ENCODE measurements at regions of chr6 and their contacts with region 1.

Region 1: DNA sequence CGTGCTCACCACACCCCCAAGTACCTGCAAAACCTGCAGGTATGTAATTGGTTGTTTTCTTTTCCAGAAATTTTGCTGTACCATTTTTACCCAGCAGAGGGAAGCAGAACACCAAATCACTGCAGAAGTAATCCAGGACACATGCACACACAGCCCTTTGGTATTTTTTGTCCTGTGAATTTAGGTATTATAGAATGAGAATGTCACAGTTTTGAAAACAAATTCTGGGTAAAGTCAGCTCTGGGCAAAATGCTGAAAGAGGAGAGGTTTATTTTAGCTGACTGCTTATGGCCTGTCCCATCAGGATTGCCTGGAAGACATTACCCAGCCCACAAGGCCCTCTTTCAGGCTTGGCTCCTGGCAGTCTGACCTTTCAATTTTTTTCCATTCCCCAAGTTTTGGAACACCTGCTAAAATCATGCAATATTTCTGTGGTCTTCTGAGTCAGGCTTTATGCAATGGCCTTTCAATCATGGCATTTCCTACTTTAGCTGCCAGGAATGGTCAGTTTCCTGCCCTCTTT is 3.5 kb upstream of the EFHC1 start:
- DNase-seq: no peak
- ATAC-seq: no peak

Region 2: DNA sequence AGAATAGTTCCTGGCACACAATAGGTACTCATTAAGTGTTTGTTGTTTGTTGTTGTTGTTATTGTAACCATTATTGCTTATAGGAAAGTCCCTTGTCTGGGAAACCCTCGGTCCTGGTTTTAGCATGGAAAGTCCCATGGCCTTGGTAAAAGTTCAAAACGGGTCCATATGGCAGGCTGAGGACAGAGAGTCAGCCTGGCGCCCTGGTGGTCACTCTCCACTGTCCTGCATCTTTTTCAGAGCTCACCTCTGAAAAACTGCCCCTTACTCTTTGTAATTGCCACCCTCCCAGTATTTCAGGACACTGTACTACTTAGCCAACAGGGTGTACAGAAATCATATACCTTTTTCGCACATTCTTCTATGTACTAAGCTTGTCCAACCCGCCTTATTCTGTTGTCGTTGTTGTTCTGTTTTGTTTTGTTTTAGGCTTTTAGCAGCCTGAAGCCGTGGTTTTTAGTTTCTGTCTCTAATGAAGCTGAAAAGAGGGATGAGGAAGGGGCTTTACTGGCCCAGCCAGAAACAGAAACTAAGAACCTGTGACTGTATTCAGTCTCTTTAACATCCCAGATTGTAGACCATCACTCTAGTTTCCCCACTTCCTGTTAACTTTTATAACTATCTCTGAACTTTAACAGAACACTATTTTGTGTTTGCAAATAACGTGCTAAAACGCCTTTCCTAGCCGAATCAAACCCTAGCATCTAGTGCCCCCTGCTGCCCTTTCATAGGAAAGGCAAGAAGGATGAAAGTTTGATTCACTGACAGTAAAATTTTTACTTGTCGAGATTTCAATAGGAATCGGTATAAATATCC is 246.6 kb after region 1 on chr6:
- intact Hi-C with region 1: loop called (anchors 2 kb)
- DNase-seq: peak; percentile 66
- ATAC-seq: peak; percentile 82